A673 (cell line): ENCODE measurements at regions of chr3 and their contacts with region 1.

Region 1: DNA sequence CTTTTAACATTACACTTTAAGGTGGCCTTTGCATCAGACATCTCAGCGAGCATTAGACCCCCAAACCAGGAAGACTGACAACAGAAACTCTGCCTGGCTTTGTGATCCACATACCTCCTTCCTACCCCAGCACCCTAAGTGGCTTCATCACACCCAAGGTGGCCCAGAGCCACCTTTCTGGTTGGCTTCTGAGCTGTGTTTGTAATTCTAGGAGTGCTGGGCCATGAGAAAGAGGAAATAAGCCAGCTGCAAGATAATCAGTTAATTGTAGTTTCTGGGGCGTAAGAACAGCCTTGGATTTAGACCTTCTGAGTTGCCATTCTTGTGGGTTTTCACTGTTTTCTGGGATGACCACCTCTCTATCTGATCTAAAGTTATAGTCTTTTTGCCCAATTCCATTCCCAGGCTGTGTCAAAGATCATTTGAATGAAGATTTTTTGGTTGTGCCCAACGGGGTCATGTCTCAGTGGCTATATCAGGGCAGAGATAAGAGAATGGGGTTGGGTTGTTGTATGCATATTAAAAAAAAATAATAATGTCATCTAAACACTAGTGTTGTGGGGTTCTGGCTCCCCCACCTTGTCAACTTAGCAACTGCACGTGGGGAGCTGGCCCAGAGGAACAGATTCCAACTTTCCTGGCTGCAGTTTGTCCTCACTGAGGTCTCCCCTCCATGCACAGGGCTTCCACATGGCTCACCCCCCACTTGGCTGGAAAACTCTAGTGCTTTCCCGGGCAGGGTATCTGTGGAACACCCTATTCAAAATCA is 234.8 kb upstream of the WNT5A start:
- DNase-seq: peak; percentile 26
- H3K4me3 ChIP-seq: no peak overlapping the region
- H3K27ac ChIP-seq: no peak overlapping the region
- H3K4me1 ChIP-seq: peaks cover 70% of the 10 kb centered on the region
- H3K27me3 ChIP-seq: no peaks in the 10 kb centered on the region
- CTCF ChIP-seq: peak; percentile 51

Region 2: DNA sequence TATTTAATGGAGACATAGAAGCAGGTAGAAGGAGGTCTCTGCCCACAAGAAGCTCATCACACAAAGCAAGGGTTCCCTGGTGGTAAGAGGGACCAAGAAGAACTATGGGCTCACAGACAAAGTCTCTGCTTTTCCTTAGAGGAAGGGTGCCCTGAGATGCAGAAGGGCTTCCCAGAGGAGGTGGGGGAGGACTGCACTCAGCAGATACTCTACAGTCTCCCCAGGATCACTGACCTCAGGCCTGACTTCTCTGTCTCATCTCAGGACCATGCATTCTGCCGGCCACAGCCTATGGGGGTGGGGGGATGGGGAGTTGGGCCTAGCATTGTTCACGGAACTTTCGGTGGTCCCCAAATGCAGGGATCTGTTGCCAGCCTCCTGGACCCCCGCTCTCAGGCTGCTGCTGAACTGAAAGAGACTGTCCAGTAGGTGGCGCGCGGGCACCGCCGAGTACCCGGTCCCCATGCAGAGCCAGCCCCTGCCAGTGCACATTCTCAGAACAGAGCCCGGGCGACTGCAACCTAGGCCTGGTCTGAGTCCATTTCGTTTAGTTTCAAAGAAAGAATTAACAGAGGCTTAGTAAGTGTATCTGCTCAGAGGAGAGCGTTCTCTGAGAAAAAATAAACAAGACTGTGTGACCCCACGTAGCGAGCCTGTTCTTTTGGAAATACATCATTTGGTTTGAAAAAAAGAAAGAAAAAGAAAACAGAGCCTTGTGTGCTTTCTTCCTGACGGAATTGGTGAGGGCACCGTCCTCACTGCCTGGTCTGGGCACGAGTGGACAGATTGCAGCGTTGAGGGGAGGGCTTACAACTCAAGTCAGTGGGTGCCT is 868.1 kb before region 1 on chr3:
- CTCF ChIA-PET with region 1: no interaction called
- POLR2A ChIA-PET with region 1: no interaction called
- intact Hi-C with region 1: loop called (anchors 10 kb)
- DNase-seq: peak; percentile 38
- H3K4me3 ChIP-seq: no peak overlapping the region
- H3K27ac ChIP-seq: no peak overlapping the region
- H3K4me1 ChIP-seq: no peaks in the 10 kb centered on the region
- H3K27me3 ChIP-seq: peaks cover 8% of the 10 kb centered on the region
- CTCF ChIP-seq: peak; percentile 75

Region 3: GRCh38 chr3:54951405-54951804 is 770.5 kb before region 1 on chr3:
- CTCF ChIA-PET with region 1: no interaction called
- POLR2A ChIA-PET with region 1: no interaction called
- intact Hi-C with region 1: loop called (anchors 10 kb)
- DNase-seq: peak; percentile 26
- H3K4me3 ChIP-seq: no peak overlapping the region
- H3K27ac ChIP-seq: no peak overlapping the region
- H3K4me1 ChIP-seq: no peaks in the 10 kb centered on the region
- H3K27me3 ChIP-seq: no peaks in the 10 kb centered on the region
- CTCF ChIP-seq: peak; percentile 31; the same call in 1 of the 2 replicates

Region 4: GRCh38 chr3:55485211-55485791 is 236.6 kb before region 1 on chr3:
- CTCF ChIA-PET with region 1: interaction called, 3 read pairs
- POLR2A ChIA-PET with region 1: no interaction called
- intact Hi-C with region 1: loop called (anchors 2 kb)
- DNase-seq: peak; percentile 83
- H3K4me3 ChIP-seq: peak overlapping the region; percentile 79
- H3K27ac ChIP-seq: peak overlapping the region; percentile 81
- H3K4me1 ChIP-seq: peaks cover 3% of the 10 kb centered on the region
- H3K27me3 ChIP-seq: no peaks in the 10 kb centered on the region
- CTCF ChIP-seq: peak; percentile 44; the same call in 1 of the 2 replicates

Region 5: GRCh38 chr3:55549177-55549576 is 172.7 kb before region 1 on chr3:
- CTCF ChIA-PET with region 1: no interaction called
- POLR2A ChIA-PET with region 1: no interaction called
- intact Hi-C with region 1: loop called (anchors 2 kb)
- DNase-seq: peak; percentile 43
- H3K4me3 ChIP-seq: no peak overlapping the region
- H3K27ac ChIP-seq: no peak overlapping the region
- H3K4me1 ChIP-seq: peaks cover 26% of the 10 kb centered on the region
- H3K27me3 ChIP-seq: no peaks in the 10 kb centered on the region
- CTCF ChIP-seq: 0 out of 2 replicates have a peak, but pooled peaks have one; percentile 26

Region 6: GRCh38 chr3:55559500-55560423 is 162.1 kb before region 1 on chr3:
- CTCF ChIA-PET with region 1: no interaction called
- POLR2A ChIA-PET with region 1: no interaction called
- intact Hi-C with region 1: no loop called
- DNase-seq: no peak
- H3K4me3 ChIP-seq: no peak overlapping the region
- H3K27ac ChIP-seq: no peak overlapping the region
- H3K4me1 ChIP-seq: no peaks in the 10 kb centered on the region
- H3K27me3 ChIP-seq: no peaks in the 10 kb centered on the region
- CTCF ChIP-seq: no peak

Region 7: DNA sequence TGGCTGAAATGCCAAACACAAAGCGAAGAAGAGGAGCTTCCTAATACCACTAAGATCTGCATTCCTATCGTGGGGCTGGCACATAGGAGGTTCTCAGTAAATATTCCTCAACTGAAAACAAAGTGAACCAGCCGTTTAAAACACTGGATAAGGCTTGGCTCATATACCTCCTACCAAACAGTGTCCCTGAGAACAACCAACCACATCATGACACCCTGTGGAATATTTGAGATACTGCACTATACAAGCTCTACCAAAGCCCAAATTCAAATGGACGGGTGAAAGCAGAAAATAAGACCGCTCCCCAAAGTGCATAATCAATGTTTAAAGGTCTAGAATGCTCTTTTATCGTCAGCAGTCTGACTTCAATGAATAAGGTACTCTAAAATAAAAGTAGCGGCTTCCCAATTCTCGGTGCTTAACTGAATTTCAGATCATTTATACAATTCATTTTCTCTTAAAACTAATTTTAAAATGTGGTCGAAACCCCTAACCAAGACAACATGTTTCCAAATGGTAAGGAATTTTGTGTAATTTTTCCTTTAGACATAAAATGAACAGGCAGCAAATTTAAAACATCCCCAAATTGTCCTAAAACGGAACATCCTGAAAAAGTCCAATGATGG is 320.5 kb after region 1 on chr3:
- CTCF ChIA-PET with region 1: no interaction called
- POLR2A ChIA-PET with region 1: no interaction called
- intact Hi-C with region 1: loop called (anchors 10 kb)
- DNase-seq: peak; percentile 63
- H3K4me3 ChIP-seq: no peak overlapping the region
- H3K27ac ChIP-seq: no peak overlapping the region
- H3K4me1 ChIP-seq: peaks cover 8% of the 10 kb centered on the region
- H3K27me3 ChIP-seq: no peaks in the 10 kb centered on the region
- CTCF ChIP-seq: peak; percentile 61

Region 8: DNA sequence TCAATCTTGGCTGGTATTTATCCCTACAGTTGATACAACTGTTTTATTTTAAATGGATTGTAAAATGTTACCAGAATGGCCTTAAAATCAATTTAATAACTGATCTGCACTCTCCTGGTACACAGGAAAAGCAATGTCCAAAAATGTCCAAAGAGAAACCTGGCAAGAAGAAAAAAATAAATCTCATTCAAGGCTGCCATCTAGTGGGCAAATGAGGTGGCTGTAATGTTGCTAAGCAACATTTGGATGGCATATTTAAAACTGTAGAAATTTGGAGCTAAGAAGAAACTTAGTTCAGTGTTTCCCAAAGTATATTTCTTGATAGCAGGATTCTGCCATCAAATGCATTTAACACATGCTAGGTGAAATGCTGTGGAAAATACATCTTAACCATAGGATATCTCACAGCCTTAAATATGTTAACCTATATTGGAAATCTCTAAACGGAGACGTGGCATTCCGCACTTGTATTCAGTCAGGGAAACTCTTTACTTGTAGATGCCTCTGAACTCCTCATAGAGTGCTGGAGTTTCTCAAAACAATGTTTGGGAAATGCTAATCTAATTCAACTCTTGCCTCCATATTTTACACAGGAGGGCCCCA is 529.5 kb after region 1 on chr3:
- CTCF ChIA-PET with region 1: no interaction called
- POLR2A ChIA-PET with region 1: no interaction called
- intact Hi-C with region 1: loop called (anchors 5 kb)
- DNase-seq: peak; percentile 41
- H3K4me3 ChIP-seq: no peak overlapping the region
- H3K27ac ChIP-seq: no peak overlapping the region
- H3K4me1 ChIP-seq: no peaks in the 10 kb centered on the region
- H3K27me3 ChIP-seq: no peaks in the 10 kb centered on the region
- CTCF ChIP-seq: peak; percentile 64